Dorsolateral prefrontal cortex (tissue), 120 donors: ENCODE measurements at regions of chr7 and their contacts with region 1.

Region 1: GRCh38 chr7:44847508-44847920 is 373 bp downstream of the H2AZ2 start:
- DNase-seq: peak; percentile 74 to 91 (median 84)
- H3K4me3 ChIP-seq: peak overlapping the region; percentile 56 to 97 (median 83)
- H3K27ac ChIP-seq: peak overlapping the region; percentile 76 to 98 (median 96)
- H3K27me3 ChIP-seq: no peaks in the 10 kb centered on the region
- CTCF ChIP-seq: peak; percentile 50 to 96 (median 85)

Region 2: GRCh38 chr7:44581879-44582603 is 265.5 kb before region 1 on chr7 and contains the start of gene TMED4:
- intact Hi-C with region 1: loop called in 1 of 2 experiments (anchors 2 kb)
- DNase-seq: peak; percentile 98 to 99 (median 98)
- H3K4me3 ChIP-seq: peak within 1 kb of the TSS; percentile 65 to 100 (median 98)
- H3K27ac ChIP-seq: peak within 1 kb of the TSS; percentile 87 to 100 (median 98)
- H3K27me3 ChIP-seq: no peaks in the 10 kb centered on the region
- CTCF ChIP-seq: peak in 23 of 56 donors; percentile 3 to 51 (median 19)
- total RNA-seq, gene TMED4: 53.4 to 91.7 (median 69.9) TPM

Region 3: GRCh38 chr7:44606450-44607254 is 240.9 kb before region 1 on chr7 and contains the start of gene OGDH:
- intact Hi-C with region 1: loop called (anchors 2 to 5 kb)
- DNase-seq: peak; percentile 98 to 100 (median 99)
- H3K4me3 ChIP-seq: peak within 1 kb of the TSS; percentile 60 to 99 (median 88)
- H3K27ac ChIP-seq: peak within 1 kb of the TSS; percentile 88 to 100 (median 98)
- H3K27me3 ChIP-seq: no peaks in the 10 kb centered on the region
- CTCF ChIP-seq: peak in 11 of 56 donors; percentile 1 to 33 (median 12)
- total RNA-seq, gene OGDH: 86.3 to 153 (median 120) TPM

Region 4: GRCh38 chr7:44757311-44757710 is 90.2 kb before region 1 on chr7:
- intact Hi-C with region 1: loop called in 1 of 2 experiments (anchors 5 kb)
- DNase-seq: peak in 5 of 10 donors; percentile 39 to 67 (median 58)
- H3K4me3 ChIP-seq: no peak overlapping the region
- H3K27ac ChIP-seq: peak overlapping the region in 55 of 59 donors; percentile 16 to 84 (median 71)
- H3K27me3 ChIP-seq: no peaks in the 10 kb centered on the region
- CTCF ChIP-seq: no peak

Region 5: DNA sequence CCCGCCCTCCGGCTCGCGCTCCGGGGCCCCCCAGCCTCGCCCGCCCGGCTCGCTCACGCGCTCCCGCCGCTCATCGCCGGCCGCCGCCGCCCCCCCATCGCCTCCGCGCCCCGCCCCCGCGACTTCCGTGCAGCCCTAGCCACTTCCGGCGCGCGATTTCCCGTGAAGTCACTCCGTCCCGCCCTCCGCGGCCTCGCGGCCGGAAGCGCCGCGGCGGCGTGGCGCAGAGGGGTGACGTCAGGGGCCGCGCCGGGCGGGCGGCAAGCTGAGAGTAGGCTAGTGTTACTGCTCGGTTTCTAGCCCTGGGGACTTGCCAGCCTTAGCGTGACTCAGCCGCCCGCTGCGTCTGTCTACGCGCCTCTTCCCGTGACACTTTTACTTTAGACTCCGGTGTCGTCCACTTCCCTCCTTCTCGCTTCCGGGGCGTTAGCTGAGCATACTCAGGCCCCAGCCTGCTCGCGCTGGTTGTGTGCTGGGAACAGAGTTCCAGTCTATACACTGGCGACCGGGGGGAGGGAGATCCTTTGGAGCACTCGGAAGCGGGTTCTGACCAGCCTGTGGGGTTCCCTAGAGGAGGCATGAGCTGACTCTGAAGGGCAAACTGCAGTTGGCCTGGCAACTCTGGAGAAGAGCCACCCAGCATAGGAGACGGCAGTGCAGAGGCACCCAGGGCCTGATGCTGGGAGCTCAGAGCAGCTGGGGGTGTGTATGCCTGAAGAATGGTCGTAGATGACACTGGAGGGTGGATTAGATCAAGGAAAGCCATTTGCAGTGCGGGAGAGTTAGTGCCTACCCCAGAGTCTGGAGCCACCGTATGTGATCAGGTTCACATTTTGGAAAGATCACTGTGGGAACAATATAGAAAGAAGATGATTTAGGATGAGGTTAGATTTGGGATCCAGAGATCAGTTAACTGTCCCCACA is 38.1 kb after region 1 on chr7 and contains the start of gene PURB:
- intact Hi-C with region 1: loop called (anchors 2 kb)
- DNase-seq: peak; percentile 88 to 97 (median 94)
- H3K4me3 ChIP-seq: peak within 1 kb of the TSS; percentile 70 to 100 (median 94)
- H3K27ac ChIP-seq: peak within 1 kb of the TSS; percentile 82 to 99 (median 97)
- H3K27me3 ChIP-seq: no peaks in the 10 kb centered on the region
- CTCF ChIP-seq: peak in 11 of 56 donors; percentile 6 to 33 (median 22)
- total RNA-seq, gene PURB: 28.0 to 55.6 (median 40.5) TPM

Region 6: DNA sequence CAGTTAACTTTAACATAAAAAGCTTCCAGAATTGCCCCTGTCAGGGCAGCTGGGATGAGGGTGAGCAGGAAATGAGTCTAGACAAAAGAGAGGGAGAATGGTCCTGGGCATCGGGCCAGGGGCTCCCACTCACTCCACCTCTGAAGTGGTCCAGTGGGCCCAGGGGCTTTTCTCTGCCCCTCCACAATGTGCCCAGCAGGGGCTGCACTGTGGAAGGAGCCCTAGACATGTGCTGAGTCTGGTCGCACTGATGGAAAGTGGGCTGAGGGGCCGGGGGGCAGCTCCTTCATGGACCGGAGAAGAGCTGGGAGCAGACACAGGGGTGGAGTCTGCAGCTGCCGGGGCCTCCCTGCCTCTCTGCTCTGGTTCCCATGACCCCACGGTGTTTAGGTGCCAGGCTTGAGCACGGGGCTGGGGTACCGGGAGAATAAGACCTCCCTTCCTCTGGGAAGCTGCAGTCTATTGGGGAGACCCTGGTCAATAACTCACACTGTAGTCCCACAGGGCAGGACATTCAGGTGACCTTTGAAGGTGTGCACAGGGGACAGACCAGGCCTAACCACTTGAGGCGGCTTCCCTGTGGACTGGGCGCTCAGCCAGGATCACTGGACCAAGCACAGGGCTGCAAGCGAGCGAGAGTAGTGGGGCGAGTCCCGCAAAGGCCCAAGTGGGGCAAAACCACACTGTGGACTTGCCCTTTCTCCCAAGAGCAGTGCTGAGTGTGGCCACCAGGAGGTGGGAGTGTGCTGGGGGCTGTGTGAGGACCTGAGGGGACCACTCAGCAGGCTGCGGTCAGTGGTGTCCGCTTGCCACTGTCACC is 732.7 kb after region 1 on chr7:
- intact Hi-C with region 1: no loop called
- DNase-seq: peak in 2 of 10 donors; percentile 22 to 33
- H3K4me3 ChIP-seq: no peak overlapping the region
- H3K27ac ChIP-seq: peak overlapping the region in 6 of 59 donors; percentile 8 to 76 (median 23)
- H3K27me3 ChIP-seq: peaks cover 0 to 33% (median 5%) of the 10 kb centered on the region in 45 donors
- CTCF ChIP-seq: peak in 15 of 56 donors; percentile 9 to 39 (median 15)